ENCODE measurements at regions of chr16 and their contacts with region 1.

Region 1: GRCh38 chr16:29784901-29785500 is 5.5 kb upstream of the KIF22 start:
- DNase-seq: peak; percentile 82
- H3K4me3 Mint-ChIP-seq: peak overlapping the region; percentile 61
- H3K27ac Mint-ChIP-seq: no peak overlapping the region
- H3K4me1 Mint-ChIP-seq: peaks cover 25% of the 10 kb centered on the region
- H3K27me3 Mint-ChIP-seq: no peaks in the 10 kb centered on the region

Region 2: DNA sequence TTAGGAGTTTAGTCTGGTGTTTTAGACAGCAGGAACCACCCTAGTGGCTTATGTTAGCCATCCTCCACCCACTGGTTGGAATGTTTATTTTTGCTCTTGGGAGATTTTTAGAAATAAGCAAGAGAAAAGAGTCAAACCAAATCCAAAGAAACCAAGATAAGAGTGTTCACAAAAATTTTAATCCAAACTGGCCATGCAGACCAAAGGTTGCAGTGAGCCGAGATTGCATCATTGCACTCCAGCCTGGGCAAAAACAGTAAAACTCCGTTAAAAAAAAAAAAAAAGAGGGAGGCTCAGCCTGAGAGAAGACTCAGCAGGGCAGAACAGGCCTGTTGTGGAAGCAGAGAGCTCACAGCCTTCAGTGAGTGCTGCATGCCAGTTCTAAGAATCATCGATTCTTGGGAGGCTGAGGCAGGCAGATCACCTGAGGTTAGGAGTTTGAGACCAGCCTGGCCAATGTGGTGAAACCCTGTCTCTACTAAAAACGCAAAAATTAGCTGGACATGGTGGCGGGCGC is 27.0 kb before region 1 on chr16:
- CTCF ChIA-PET with region 1: interaction called, 13 read pairs
- intact Hi-C with region 1: no loop called
- DNase-seq: no peak
- H3K4me3 Mint-ChIP-seq: no peak overlapping the region
- H3K27ac Mint-ChIP-seq: no peak overlapping the region
- H3K4me1 Mint-ChIP-seq: peaks cover 38% of the 10 kb centered on the region
- H3K27me3 Mint-ChIP-seq: no peaks in the 10 kb centered on the region

Measured in activated naive CD4-positive, alpha-beta T cell treated with anti-CD3 and anti-CD28 coated beads for 36 hours (primary cell).